CD4-positive, alpha-beta memory T cell (primary cell): ENCODE measurements at regions of chr18 and their contacts with region 1.

Region 1: DNA sequence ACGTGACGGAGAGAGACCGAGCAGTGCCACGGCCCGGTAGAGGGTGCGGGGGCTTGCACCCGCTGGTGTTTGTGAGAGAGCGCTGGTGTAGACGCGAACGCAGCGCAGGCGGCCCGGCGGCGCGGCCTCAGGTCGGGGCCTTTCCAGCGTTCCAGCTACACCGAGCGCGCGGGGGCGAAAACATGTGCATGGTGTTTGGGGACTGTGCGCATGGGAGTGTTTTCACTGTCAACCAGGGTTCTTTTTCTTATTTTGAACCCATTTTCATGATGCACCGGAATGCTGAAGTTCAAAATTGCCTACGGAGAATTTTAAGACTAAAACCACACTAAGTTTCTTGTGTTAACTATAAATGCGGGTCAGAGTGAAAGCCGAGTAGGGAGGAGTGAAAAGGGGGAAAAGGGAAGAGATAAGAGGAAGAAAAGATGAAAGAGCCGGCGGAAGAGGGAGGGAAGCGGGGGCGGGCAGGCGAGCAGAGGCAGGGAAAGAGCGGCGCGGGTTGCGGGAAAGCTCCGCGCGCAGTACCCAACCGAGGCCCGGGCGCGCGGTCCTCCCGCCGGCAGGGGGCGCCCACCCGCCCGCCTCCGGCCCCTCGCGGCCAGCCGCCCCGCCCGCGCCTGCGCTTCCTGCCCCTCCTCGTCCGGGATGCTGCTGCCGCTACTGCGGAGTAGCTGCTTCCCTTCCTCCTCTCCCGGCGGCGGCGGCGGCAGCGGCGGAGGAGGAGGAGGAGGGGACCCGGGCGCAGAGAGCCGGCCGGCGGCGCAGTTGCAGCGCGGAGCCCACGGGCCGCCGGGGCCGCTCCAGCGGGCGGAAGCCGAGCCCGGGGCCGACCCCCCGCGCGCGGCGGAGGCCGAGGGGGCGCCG is at the start of gene RAB12:
- DNase-seq: peak; percentile 84 to 87 (median 85)
- H3K4me3 ChIP-seq: peak within 1 kb of the TSS; percentile 83 to 89
- H3K4me3 Mint-ChIP-seq: peak within 1 kb of the TSS; percentile 90 to 96 (median 92)
- H3K27ac ChIP-seq: peak within 1 kb of the TSS; percentile 71
- H3K27ac Mint-ChIP-seq: peak within 1 kb of the TSS; percentile 84 to 96 (median 93)
- H3K4me1 ChIP-seq: peaks cover 45% of the 10 kb centered on the region
- H3K4me1 Mint-ChIP-seq: peaks cover 33 to 54% (median 44%) of the 10 kb centered on the region in 4 donors
- H3K27me3 ChIP-seq: peaks cover 1% of the 10 kb centered on the region
- H3K27me3 Mint-ChIP-seq: peaks cover 3 to 4% of the 10 kb centered on the region in 2 donors
- total RNA-seq, gene RAB12: 20.7 to 20.8 TPM

Region 2: GRCh38 chr18:7946734-7947377 is 662.2 kb before region 1 on chr18:
- CTCF ChIA-PET with region 1: no interaction called
- POLR2A ChIA-PET with region 1: no interaction called
- intact Hi-C with region 1: loop called (anchors 10 kb)
- DNase-seq: peak in 4 of 5 donors; percentile 33 to 57 (median 50)
- H3K4me3 ChIP-seq: peak overlapping the region; percentile 22 to 24
- H3K4me3 Mint-ChIP-seq: peak overlapping the region; percentile 56 to 88 (median 82)
- H3K27ac ChIP-seq: peak overlapping the region; percentile 27
- H3K27ac Mint-ChIP-seq: peak overlapping the region; percentile 20 to 95 (median 79)
- H3K4me1 ChIP-seq: peaks cover 9% of the 10 kb centered on the region
- H3K4me1 Mint-ChIP-seq: peaks cover 11 to 20% (median 15%) of the 10 kb centered on the region in 4 donors
- H3K27me3 ChIP-seq: no peaks in the 10 kb centered on the region
- H3K27me3 Mint-ChIP-seq: no peaks in the 10 kb centered on the region

Region 3: DNA sequence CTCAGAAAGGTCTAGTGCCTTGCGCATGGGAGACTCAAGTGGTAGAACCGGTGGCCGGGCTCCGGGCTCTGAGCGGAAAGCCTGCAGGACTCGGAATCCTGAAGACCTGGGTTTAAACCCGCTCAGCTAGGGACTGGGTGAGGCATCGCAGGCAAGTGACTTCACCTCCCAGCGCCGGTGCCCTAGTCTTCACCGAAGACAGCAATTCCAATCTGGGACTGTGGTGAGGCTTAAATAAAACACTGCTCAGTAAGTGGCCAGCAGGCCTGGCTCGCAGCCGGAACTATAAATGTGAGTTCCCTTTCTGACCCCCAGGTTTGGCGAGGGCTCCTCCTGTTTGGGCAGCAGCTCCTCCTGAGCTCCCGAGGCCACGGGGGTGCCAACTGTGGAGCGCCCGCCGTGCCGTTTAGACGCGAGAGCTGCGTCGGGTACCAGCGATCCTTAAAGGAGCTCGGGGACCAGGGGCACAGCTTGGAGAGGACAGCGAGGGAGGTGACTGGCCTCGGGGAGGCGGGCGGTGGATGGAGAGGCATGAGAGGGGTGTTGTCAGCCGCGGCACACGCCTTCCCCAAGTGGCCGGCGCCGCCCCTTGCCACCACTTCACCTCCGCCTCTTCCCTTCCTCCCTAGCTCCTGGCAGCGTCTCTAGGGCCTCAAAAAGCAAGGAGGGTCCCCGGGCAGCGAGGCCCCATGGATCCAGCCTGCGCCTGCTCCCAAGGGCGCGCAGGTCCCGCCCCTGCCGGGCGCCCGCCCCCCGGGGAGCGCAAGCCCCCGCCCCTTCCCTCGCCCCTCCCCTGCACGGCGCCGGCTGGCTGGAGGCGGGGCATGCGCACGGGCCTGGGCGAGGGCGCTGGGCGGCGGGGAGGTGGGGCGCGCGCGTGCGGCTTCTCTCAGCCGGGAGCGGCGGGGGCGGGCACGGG is 95.6 kb after region 1 on chr18:
- CTCF ChIA-PET with region 1: no interaction called
- POLR2A ChIA-PET with region 1: interaction called, 3 read pairs
- intact Hi-C with region 1: loop called (anchors 2 kb)
- DNase-seq: peak; percentile 76 to 86 (median 79)
- H3K4me3 ChIP-seq: peak overlapping the region; percentile 54 to 73
- H3K4me3 Mint-ChIP-seq: peak overlapping the region; percentile 87 to 96 (median 91)
- H3K27ac ChIP-seq: peak overlapping the region; percentile 48
- H3K27ac Mint-ChIP-seq: peak overlapping the region in 4 of 7 donors; percentile 50 to 79 (median 72)
- H3K4me1 ChIP-seq: peaks cover 26% of the 10 kb centered on the region
- H3K4me1 Mint-ChIP-seq: peaks cover 10 to 35% (median 15%) of the 10 kb centered on the region in 4 donors
- H3K27me3 ChIP-seq: peaks cover 29% of the 10 kb centered on the region
- H3K27me3 Mint-ChIP-seq: peaks cover 36 to 58% of the 10 kb centered on the region in 2 donors

Region 4: GRCh38 chr18:8835521-8835953 is 226.5 kb after region 1 on chr18:
- CTCF ChIA-PET with region 1: no interaction called
- POLR2A ChIA-PET with region 1: no interaction called
- intact Hi-C with region 1: no loop called
- DNase-seq: no peak
- H3K4me3 ChIP-seq: no peak overlapping the region
- H3K4me3 Mint-ChIP-seq: no peak overlapping the region
- H3K27ac ChIP-seq: no peak overlapping the region
- H3K27ac Mint-ChIP-seq: no peak overlapping the region
- H3K4me1 ChIP-seq: no peaks in the 10 kb centered on the region
- H3K4me1 Mint-ChIP-seq: no peaks in the 10 kb centered on the region
- H3K27me3 ChIP-seq: no peaks in the 10 kb centered on the region
- H3K27me3 Mint-ChIP-seq: peaks cover 8 to 9% of the 10 kb centered on the region in 2 donors

Region 5: GRCh38 chr18:9474983-9475642 is 866.1 kb after region 1 on chr18 and contains the start of gene RALBP1:
- CTCF ChIA-PET with region 1: no interaction called
- POLR2A ChIA-PET with region 1: no interaction called
- intact Hi-C with region 1: loop called (anchors 10 kb)
- DNase-seq: peak; percentile 96 to 98 (median 97)
- H3K4me3 ChIP-seq: peak within 1 kb of the TSS; percentile 86
- H3K4me3 Mint-ChIP-seq: peak within 1 kb of the TSS; percentile 94 to 99 (median 98)
- H3K27ac ChIP-seq: peak within 1 kb of the TSS; percentile 79
- H3K27ac Mint-ChIP-seq: peak within 1 kb of the TSS; percentile 95 to 98 (median 96)
- H3K4me1 ChIP-seq: peaks cover 24% of the 10 kb centered on the region
- H3K4me1 Mint-ChIP-seq: peaks cover 25 to 46% (median 33%) of the 10 kb centered on the region in 4 donors
- H3K27me3 ChIP-seq: no peaks in the 10 kb centered on the region
- H3K27me3 Mint-ChIP-seq: peaks cover 3 to 5% of the 10 kb centered on the region in 2 donors
- total RNA-seq, gene RALBP1: 44.9 to 49.9 TPM